Posterior vena cava (tissue), 2 donors: ENCODE measurements at regions of chr1 and their contacts with region 1.

Region 1: GRCh38 chr1:222749927-222750326 is 12.9 kb downstream of the FAM177B start:
- DNase-seq: no peak

Region 2: DNA sequence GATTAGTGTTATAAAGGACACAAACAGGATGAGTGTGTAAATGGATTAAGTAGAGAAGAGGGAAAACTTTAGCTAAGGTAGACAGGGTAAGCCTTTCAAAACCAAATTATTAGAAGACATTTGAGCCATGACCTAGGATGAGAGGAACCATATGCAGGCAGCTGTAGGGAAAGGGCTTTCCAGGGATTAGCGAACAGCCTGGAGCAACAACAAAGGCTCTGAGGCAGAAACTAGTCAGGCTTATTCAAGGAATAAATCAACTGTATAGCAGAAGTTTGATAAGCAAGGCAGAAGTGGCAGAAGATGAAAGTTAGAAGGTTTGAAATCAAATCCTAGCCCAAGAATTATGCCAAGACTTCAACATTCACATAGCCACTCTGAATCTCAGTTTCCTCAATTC is 58.9 kb before region 1 on chr1:
- intact Hi-C with region 1: no loop called
- DNase-seq: no peak

Region 3: DNA sequence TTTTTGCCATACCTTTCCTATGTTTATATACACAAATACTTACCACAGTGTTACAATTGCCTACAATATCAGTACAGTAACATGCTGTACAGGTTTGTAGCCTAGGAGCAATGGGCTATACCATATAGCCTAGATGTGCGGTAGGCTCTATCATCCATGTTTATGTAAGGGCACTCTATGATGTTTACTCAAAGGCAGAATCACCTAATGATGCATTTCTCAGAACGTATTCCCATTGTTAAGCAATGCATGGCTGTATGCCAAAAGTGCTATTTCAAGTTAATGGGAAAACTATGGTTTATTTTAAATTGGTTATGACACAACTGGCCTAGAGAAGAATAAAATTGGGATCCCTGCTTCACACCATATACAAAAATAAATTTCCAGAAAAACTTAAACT is 28.1 kb after region 1 on chr1:
- intact Hi-C with region 1: no loop called
- DNase-seq: no peak

Region 4: DNA sequence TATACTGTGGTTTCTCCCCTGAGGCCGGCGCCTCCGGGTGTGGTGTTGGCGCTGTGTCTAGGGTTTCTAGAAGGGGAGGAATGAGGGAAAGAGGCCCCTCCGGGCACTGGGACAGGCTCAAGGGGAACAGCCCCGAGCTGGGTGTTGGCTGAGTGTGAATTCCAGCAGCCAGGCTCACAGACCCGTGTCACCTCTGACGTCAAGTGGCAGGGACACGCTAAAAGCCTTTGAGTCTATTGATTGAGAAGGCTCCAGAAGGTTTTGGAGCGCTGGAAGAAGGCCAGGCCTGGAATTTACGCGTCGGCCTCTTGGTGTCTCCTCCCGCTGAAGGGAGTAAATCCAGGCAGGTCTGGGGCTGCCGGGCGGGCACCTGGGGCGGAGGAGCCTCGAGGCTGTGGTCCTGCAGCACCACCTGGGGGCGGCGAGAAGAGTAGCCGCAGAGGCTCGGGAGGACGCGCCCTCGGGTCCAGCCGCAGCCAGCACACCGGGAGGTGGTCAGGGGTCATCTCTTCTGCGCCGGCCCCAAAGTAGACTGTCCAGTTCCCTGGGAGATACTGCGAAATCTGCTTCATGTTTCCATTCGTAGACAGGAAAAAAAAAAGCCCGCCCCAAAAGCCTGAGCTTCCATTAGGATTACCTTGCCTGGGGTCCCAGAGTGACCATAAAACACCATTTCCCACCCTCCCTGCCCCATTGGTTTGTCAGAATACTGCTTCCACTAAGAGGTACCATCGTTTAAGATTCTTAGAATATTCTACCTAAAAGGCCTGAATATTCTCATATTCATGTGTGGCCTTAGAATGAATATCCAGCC is 331.5 kb after region 1 on chr1:
- intact Hi-C with region 1: loop called in 1 of 2 experiments (anchors 10 kb)
- DNase-seq: peak; percentile 95